ENCODE measurements at regions of chr20 and their contacts with region 1.

Region 1: DNA sequence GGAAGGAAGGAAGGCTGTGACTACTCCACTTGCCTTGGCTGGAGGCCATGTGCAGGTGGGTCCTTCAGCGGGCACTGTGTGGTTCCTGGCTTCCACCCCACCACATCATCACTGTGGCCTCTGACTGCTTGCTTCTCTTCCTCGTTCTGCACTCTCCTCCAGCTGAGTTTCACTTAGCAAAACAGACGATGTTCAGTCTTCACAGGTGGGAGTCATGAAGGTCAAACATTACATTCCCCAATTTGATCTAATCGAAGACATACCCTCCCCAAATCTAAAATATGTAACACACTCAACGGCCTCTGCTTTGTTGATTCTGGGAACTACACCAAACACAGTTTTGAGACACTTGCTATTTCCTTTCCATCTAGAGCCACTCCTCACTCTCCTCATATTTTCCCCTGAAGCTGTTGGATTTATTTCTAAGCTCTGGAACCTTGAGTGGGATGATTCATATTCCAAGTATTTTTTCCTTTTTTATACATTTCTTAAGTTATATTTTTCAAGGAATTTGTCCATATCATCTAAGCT is 132.5 kb upstream of the FOXA2 start:
- DNase-seq: peak in 2 of 4 donors; percentile 34 to 57
- ATAC-seq: peak; percentile 79
- H3K4me3 ChIP-seq: no peak overlapping the region
- H3K27ac ChIP-seq: peak overlapping the region; percentile 70 to 76
- H3K4me1 ChIP-seq: peaks cover 0 to 39% of the 10 kb centered on the region in 2 donors
- H3K27me3 ChIP-seq: no peaks in the 10 kb centered on the region
- CTCF ChIP-seq: no peak

Region 2: DNA sequence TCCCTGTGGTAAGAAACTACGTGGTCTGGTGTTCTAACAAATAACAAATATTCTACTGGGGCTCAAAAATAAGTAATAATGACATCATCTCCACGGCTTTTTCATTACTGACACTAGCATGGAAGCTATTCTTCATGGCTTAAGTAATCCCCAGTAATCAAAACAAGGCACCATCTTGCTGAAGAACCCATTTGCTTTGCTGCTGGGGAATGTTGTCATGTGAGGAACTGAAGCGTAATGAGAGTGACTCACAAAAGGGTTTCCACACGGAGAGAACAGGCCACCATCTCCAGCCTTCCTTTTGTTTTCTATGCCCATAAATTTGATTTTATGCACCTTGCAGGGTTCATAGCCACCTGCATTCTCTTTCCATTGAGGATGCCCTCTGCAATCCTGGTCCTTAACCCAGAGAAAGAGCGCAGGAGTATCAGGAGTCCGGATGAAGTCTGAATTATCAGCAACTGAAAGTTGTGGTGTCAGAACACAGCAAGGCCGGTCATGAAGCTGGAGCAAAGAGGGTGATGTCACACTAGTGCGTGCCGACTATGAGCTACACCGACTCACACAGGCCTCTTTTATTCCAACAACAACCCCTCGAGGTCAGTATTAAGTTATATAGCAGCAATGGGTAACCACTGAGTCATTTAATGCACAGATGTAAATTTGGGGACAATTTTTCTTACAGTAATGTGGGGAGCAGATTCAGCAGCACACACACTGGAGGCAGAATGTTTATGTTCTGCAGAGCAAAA is 144.5 kb after region 1 on chr20:
- intact Hi-C with region 1: loop called in 1 of 2 experiments (anchors 10 kb)
- DNase-seq: no peak
- ATAC-seq: no peak
- H3K4me3 ChIP-seq: no peak overlapping the region
- H3K27ac ChIP-seq: peak overlapping the region; percentile 11 to 51
- H3K4me1 ChIP-seq: no peaks in the 10 kb centered on the region
- H3K27me3 ChIP-seq: no peaks in the 10 kb centered on the region
- CTCF ChIP-seq: no peak